ENCODE measurements at regions of chr13 and their contacts with region 1.

Region 1: DNA sequence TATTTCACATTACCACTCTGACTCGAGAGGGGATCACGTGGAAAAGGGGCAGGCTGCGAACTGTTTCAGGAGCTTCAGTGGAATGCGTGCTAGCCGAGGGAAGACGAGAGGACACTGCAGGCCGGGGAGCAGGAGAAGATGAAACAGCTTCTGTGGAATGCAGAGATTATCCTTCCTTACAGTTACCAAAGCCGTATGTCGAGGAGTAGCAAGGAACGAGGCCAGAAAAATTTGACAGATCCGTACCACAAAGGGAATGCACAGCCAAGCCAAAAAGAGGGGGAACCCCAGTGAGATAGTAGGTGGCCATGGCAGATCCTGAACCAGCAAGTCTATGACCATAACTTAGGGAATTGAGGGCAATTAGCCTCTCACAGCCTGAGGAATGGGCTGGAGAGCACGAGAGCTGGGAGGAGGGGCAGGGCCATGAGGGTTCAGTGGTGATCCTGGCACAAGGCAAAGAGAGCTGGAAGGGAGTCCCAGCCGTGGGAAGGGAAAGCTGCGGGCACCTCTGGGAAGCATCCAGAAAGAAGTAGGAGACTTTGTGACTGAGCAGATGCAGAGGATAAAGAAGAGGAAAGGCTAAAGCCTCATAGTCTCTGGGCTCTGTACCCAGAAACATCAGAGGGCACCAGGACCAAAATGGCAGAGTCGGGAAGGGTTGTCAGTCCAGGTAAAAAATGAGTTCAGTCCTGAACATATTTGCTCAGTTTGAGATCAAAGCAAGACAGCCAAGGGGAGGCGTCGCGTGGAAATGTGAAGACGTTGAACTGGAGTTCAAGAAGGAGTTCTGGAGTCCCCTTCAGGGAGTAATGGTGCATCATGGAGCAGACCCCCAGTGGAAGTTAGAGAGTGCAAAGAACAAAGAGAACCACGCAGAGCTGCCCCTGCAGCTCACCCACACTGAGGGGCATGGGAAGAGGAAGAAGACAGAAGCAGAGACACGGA is 5.1 kb downstream of the COL4A1 start:
- DNase-seq: no peak
- H3K4me3 ChIP-seq: peak overlapping the region in 2 of 4 donors; percentile 7 to 18
- H3K27ac ChIP-seq: peak overlapping the region; percentile 99
- H3K4me1 ChIP-seq: peaks cover 63 to 87% (median 82%) of the 10 kb centered on the region in 4 donors
- H3K27me3 ChIP-seq: peaks cover 0 to 3% (median 0%) of the 10 kb centered on the region in 4 donors
- CTCF ChIP-seq: no peak
- EP300 ChIP-seq: no peak
- POLR2A ChIP-seq: no peak

Region 2: GRCh38 chr13:109859216-109859835 is 442.6 kb before region 1 on chr13:
- intact Hi-C with region 1: no loop called
- DNase-seq: peak; percentile 74
- H3K4me3 ChIP-seq: no peak overlapping the region
- H3K27ac ChIP-seq: no peak overlapping the region
- H3K4me1 ChIP-seq: no peaks in the 10 kb centered on the region
- H3K27me3 ChIP-seq: no peaks in the 10 kb centered on the region
- CTCF ChIP-seq: no peak
- EP300 ChIP-seq: no peak
- POLR2A ChIP-seq: no peak

Region 3: GRCh38 chr13:110245416-110245899 is 56.4 kb before region 1 on chr13:
- intact Hi-C with region 1: loop called (anchors 5 kb)
- DNase-seq: peak; percentile 90
- H3K4me3 ChIP-seq: no peak overlapping the region
- H3K27ac ChIP-seq: peak overlapping the region; percentile 84 to 88 (median 86)
- H3K4me1 ChIP-seq: peaks cover 82 to 92% (median 87%) of the 10 kb centered on the region in 4 donors
- H3K27me3 ChIP-seq: no peaks in the 10 kb centered on the region
- CTCF ChIP-seq: no peak
- EP300 ChIP-seq: no peak
- POLR2A ChIP-seq: no peak

Region 4: GRCh38 chr13:110265682-110266430 is 36.0 kb before region 1 on chr13:
- intact Hi-C with region 1: loop called (anchors 5 kb)
- DNase-seq: peak; percentile 88
- H3K4me3 ChIP-seq: peak overlapping the region in 2 of 4 donors; percentile 3 to 5
- H3K27ac ChIP-seq: peak overlapping the region; percentile 64 to 80 (median 72)
- H3K4me1 ChIP-seq: peaks cover 96 to 100% (median 99%) of the 10 kb centered on the region in 4 donors
- H3K27me3 ChIP-seq: no peaks in the 10 kb centered on the region
- CTCF ChIP-seq: no peak
- EP300 ChIP-seq: no peak
- POLR2A ChIP-seq: no peak

Measured in esophagus muscularis mucosa (tissue), 4 donors.